Mammary epithelial cell (primary cell): ENCODE measurements at regions of chr20 and their contacts with region 1.

Region 1: GRCh38 chr20:22691369-22692118 is 107.2 kb upstream of the FOXA2 start:
- DNase-seq: peak; percentile 43
- H3K4me3 ChIP-seq: no peak overlapping the region
- H3K27ac ChIP-seq: no peak overlapping the region
- H3K4me1 ChIP-seq: peaks cover 6% of the 10 kb centered on the region
- H3K27me3 ChIP-seq: no peaks in the 10 kb centered on the region
- CTCF ChIP-seq: peak; percentile 87 to 90

Region 2: GRCh38 chr20:22974353-22974752 is 282.8 kb after region 1 on chr20:
- CTCF ChIA-PET with region 1: no interaction called
- dilution Hi-C with region 1: no loop called
- in situ Hi-C with region 1: no loop called
- intact Hi-C with region 1: loop called (anchors 1 kb)
- DNase-seq: peak; percentile 20
- H3K4me3 ChIP-seq: no peak overlapping the region
- H3K27ac ChIP-seq: no peak overlapping the region
- H3K4me1 ChIP-seq: peaks cover 4% of the 10 kb centered on the region
- H3K27me3 ChIP-seq: no peaks in the 10 kb centered on the region
- CTCF ChIP-seq: peak; percentile 55 to 69

Region 3: DNA sequence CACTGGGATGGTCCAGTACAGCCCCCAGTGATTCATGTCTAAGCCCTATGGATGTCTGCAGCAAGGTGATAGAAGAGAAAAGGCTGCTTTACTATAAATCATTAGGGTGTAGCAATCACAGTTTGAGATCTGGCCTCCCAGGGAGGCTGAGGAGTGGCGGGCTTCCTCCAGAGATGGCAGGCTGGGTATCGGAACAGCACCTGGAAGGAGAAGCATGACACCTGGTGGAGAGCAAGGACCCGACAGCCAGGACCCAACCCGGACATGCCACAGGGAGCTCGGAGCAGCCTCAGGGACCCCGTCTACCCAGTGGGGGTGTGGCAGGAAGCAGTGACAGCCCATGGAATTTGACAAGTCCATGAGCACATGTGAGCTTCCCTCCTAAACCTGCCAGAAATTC is 509.4 kb after region 1 on chr20:
- CTCF ChIA-PET with region 1: interaction called, 3 read pairs
- dilution Hi-C with region 1: no loop called
- in situ Hi-C with region 1: loop called (anchors 10 kb)
- intact Hi-C with region 1: loop called (anchors 1 kb)
- DNase-seq: peak; percentile 45
- H3K4me3 ChIP-seq: no peak overlapping the region
- H3K27ac ChIP-seq: no peak overlapping the region
- H3K4me1 ChIP-seq: no peaks in the 10 kb centered on the region
- H3K27me3 ChIP-seq: no peaks in the 10 kb centered on the region
- CTCF ChIP-seq: peak; percentile 62 to 84

Region 4: DNA sequence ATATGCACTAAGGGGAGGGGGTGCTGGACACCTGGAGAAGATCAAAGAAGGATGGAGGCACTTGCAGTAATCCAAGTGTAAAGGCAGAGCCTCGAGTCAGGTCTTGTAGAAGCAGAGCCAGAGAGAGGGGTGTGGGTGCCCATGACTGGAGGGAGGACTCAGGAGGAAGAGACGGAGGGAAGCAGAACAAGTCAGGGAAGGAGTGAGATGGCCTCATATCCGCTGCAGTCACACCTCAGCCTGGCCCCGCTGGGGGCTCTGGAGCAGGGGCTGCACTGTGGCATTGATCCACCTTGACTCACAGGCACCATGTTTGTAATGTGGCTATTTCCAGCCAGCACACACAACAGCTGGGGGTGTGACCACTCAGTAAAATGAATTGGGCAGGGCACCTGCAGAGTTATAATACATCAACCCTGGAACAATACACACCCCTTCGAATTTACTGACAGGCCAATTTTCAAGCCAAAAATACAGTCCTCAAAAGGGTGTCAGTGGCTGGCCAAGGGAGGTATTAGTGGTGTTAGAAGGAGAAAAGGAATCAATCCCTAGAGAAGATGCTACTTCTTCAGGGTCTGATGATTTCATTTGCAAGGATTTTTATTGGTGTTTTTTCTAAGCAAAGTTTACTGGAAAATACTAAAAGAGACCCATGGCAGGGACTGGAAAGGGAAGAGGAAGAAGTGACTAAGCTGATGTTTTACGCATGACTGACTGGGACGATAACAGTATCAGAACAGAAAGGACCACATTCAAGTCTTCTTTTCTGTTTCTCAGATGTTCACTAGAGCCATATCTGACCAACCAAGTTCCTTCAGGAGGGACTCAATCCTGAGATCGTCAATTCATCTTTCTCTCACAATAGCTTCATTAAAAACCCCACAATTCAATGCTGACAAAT is 640.2 kb after region 1 on chr20:
- CTCF ChIA-PET with region 1: no interaction called
- dilution Hi-C with region 1: no loop called
- in situ Hi-C with region 1: loop called (anchors 10 kb)
- intact Hi-C with region 1: no loop called
- DNase-seq: no peak
- H3K4me3 ChIP-seq: no peak overlapping the region
- H3K27ac ChIP-seq: no peak overlapping the region
- H3K4me1 ChIP-seq: no peaks in the 10 kb centered on the region
- H3K27me3 ChIP-seq: no peaks in the 10 kb centered on the region
- CTCF ChIP-seq: no peak

Region 5: DNA sequence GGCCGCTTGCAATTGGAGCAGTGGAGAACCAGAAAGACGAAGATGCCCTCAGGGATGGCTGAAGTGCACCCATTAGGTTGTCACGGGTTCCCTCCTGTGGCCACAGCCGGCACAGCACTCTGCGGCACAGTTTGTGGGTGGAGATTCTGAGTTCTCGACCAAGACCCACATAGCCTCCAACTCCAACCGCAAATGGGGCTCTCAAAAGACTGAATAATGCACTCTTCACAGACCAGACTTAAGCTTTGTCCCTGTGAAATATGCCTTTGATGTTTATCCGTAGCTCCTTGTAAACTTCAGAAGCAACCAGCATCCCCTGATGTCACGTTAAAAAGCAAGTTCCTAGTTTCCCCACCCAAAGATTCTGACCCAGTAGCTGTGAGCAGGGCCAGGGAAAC is 915.1 kb after region 1 on chr20:
- CTCF ChIA-PET with region 1: no interaction called
- dilution Hi-C with region 1: no loop called
- in situ Hi-C with region 1: no loop called
- intact Hi-C with region 1: loop called (anchors 5 kb)
- DNase-seq: peak; percentile 61
- H3K4me3 ChIP-seq: no peak overlapping the region
- H3K27ac ChIP-seq: no peak overlapping the region
- H3K4me1 ChIP-seq: no peaks in the 10 kb centered on the region
- H3K27me3 ChIP-seq: no peaks in the 10 kb centered on the region
- CTCF ChIP-seq: peak; percentile 97